ENCODE measurements at regions of chr15 and their contacts with region 1.

Region 1: GRCh38 chr15:27165583-27165982 is 194.6 kb downstream of the GABRG3 start:
- DNase-seq: no peak
- H3K4me3 ChIP-seq: no peak overlapping the region
- H3K27ac ChIP-seq: no peak overlapping the region
- H3K4me1 ChIP-seq: no peaks in the 10 kb centered on the region
- H3K27me3 ChIP-seq: no peaks in the 10 kb centered on the region
- CTCF ChIP-seq: no peak
- EP300 ChIP-seq: no peak
- POLR2A ChIP-seq: no peak

Region 2: DNA sequence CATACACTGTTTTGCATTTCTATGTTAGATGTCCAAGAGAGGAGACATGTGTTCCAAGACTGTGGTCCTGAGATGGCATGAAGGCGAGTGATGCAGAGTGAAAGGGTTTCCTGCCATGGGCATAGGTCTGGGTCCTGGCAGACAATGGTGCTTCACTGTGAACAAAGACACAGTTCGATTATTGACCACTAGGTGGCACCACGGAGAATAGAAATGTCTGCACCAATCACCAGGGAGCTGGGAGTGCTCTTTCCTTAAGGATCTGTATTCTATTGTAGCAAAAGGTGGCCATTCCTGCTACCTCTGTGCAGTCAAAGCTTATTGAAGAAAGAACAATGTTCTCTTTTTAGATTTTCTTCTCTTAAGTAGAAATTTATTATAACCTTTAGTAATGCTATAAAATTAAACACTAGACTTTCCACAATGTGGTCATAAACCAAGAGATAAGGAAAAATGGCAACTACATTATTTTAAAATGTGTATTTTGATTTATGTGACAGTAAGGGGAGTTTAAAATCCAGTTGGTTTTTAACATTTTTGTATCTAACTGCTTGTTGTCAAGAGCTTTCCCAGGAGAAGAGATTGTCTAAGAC is 105.9 kb before region 1 on chr15:
- in situ Hi-C with region 1: loop called in 1 of 4 experiments (anchors 25 kb)
- intact Hi-C with region 1: no loop called
- DNase-seq: no peak
- H3K4me3 ChIP-seq: no peak overlapping the region
- H3K27ac ChIP-seq: no peak overlapping the region
- H3K4me1 ChIP-seq: no peaks in the 10 kb centered on the region
- H3K27me3 ChIP-seq: no peaks in the 10 kb centered on the region
- CTCF ChIP-seq: peak in 3 of 5 experiments; percentile 32 to 37 (median 36)
- EP300 ChIP-seq: no peak
- POLR2A ChIP-seq: no peak